Motor neuron (in vitro differentiated cells): ENCODE measurements at regions of chr3 and their contacts with region 1.

Region 1: GRCh38 chr3:155701882-155702465 is 42.9 kb downstream of the PLCH1 start:
- ATAC-seq: peak in 7 of 8 experiments; percentile 30 to 80 (median 47)
- H3K4me3 ChIP-seq: no peak overlapping the region
- H3K27ac ChIP-seq: no peak overlapping the region
- H3K4me1 ChIP-seq: peaks cover 10 to 28% of the 10 kb centered on the region in 2 donors

Region 2: DNA sequence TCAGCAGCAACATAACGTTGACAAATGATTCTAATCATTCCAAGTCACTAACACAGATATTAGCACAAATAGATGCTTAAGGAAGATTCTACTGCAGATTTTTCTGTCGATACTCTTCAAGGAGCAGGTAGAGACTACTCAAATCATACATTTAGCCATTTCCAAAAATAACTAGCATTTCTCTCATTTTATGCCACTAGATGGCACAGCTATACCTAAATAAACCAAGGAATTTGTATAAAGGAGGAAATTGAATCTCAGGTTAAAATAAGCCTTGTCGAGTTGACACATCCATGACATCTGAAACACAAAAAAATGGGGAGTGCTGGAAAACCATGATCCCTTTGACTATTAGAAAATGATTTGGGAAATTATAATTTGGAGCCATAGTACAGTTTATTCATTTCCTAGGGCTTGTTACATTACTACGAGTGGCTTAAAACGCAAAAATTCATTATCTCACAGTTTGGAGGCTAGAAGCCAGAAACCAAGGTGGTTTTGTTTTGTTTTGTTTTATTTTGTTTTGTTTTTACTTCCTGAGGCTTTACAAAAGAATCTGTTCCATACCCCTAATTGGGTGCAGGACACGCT is 349.0 kb before region 1 on chr3:
- in situ Hi-C with region 1: loop called in 3 of 9 experiments (anchors 10 kb)
- ATAC-seq: peak in 4 of 8 experiments; percentile 36 to 53 (median 48)
- H3K4me3 ChIP-seq: no peak overlapping the region
- H3K27ac ChIP-seq: no peak overlapping the region
- H3K4me1 ChIP-seq: no peaks in the 10 kb centered on the region

Region 3: DNA sequence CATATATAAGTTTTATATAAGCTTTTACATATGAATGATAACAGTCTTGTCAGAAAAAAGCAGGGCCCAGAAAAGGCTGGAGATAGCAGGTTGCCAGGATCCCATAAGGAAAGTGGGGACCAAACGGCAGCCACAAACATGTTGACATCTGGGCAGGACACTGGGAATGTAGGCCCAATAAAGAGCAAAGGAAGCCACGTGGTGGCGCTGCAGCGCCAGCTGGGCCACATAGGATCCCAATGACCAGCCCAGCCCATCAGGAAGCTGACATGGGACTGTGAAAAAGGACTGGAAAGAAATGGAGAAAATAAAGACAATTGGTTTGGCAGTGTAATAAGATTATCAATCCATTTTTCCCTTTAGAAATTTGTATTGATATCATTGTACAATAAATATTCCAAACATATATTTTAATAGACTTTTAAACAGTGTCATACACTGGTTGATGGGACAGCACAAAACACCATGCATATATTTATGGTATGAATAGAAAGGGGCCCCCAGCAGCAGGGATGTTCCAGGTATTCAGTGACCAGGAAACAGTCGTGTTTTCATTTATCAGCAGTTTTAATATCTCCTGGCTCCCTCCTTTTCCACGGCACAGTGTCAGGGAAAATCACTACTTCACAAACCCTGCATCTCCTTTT is 319.5 kb before region 1 on chr3:
- in situ Hi-C with region 1: loop called in 5 of 9 experiments (anchors 10 to 25 kb)
- ATAC-seq: peak; percentile 90 to 100 (median 100)
- H3K4me3 ChIP-seq: no peak overlapping the region
- H3K27ac ChIP-seq: no peak overlapping the region
- H3K4me1 ChIP-seq: peaks cover 11% of the 10 kb centered on the region in 2 donors

Region 4: GRCh38 chr3:157190388-157190872 is 1488.5 kb after region 1 on chr3:
- in situ Hi-C with region 1: no loop called
- ATAC-seq: peak in 3 of 8 experiments; percentile 22 to 99 (median 98)
- H3K4me3 ChIP-seq: no peak overlapping the region
- H3K27ac ChIP-seq: no peak overlapping the region
- H3K4me1 ChIP-seq: no peaks in the 10 kb centered on the region